ENCODE measurements at regions of chr9 and their contacts with region 1.

Region 1: GRCh38 chr9:122506964-122507363 is 3.6 kb upstream of the OR1J2 start:
- DNase-seq: no peak
- ATAC-seq: no peak
- H3K4me3 Mint-ChIP-seq: no peak overlapping the region
- H3K27ac Mint-ChIP-seq: no peak overlapping the region
- H3K4me1 Mint-ChIP-seq: no peaks in the 10 kb centered on the region
- H3K27me3 Mint-ChIP-seq: peaks cover 20% of the 10 kb centered on the region
- CTCF ChIP-seq: no peak

Region 2: DNA sequence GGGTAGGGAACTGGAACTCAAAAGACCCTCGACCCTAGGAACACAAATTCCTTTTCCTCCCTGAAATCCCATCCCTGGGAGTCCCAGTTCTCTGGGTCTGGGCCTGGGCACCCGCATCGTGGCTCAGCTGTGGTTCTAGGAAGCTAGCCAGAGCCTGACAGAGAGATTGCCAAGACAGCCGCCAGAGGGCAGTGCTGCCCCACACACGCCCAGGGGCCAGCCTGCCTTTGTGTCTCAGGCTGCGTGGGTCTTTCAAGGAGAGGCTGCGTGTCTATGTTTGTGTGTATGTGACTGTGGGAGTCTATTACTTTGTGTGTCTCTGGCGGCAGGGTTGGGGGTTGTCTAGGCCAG is 381.8 kb before region 1 on chr9:
- CTCF ChIA-PET with region 1: no interaction called
- POLR2A ChIA-PET with region 1: no interaction called
- intact Hi-C with region 1: no loop called
- DNase-seq: peak; percentile 76
- ATAC-seq: peak; percentile 84
- H3K4me3 Mint-ChIP-seq: peak overlapping the region; percentile 38
- H3K27ac Mint-ChIP-seq: no peak overlapping the region
- H3K4me1 Mint-ChIP-seq: peaks cover 13% of the 10 kb centered on the region
- H3K27me3 Mint-ChIP-seq: peaks cover 40% of the 10 kb centered on the region
- CTCF ChIP-seq: peak; percentile 75

Region 3: GRCh38 chr9:122445155-122445749 is 61.7 kb before region 1 on chr9:
- CTCF ChIA-PET with region 1: no interaction called
- POLR2A ChIA-PET with region 1: no interaction called
- intact Hi-C with region 1: loop called (anchors 10 kb)
- DNase-seq: no peak
- ATAC-seq: no peak
- H3K4me3 Mint-ChIP-seq: no peak overlapping the region
- H3K27ac Mint-ChIP-seq: no peak overlapping the region
- H3K4me1 Mint-ChIP-seq: no peaks in the 10 kb centered on the region
- H3K27me3 Mint-ChIP-seq: peaks cover 36% of the 10 kb centered on the region
- CTCF ChIP-seq: no peak

Measured in activated B cell treated with CpG ODN at 0.5 μM for 24 hours (primary cell).